GM10248 (cell line): ENCODE measurements at regions of chr1 and their contacts with region 1.

Region 1: GRCh38 chr1:214328770-214329469 is 48.0 kb downstream of the SMYD2 start:
- DNase-seq: peak; percentile 82
- CTCF ChIP-seq: peak; percentile 96

Region 2: GRCh38 chr1:214146523-214146922 is 182.4 kb before region 1 on chr1:
- CTCF ChIA-PET with region 1: no interaction called
- POLR2A ChIA-PET with region 1: no interaction called
- DNase-seq: no peak
- CTCF ChIP-seq: no peak

Region 3: GRCh38 chr1:214247501-214248041 is 81.3 kb before region 1 on chr1:
- CTCF ChIA-PET with region 1: interaction called, 44 read pairs
- POLR2A ChIA-PET with region 1: no interaction called
- DNase-seq: no peak
- CTCF ChIP-seq: no peak

Region 4: GRCh38 chr1:214281021-214281719 is 47.8 kb before region 1 on chr1 and contains the start of gene SMYD2:
- CTCF ChIA-PET with region 1: interaction called, 77 read pairs
- POLR2A ChIA-PET with region 1: no interaction called
- DNase-seq: peak; percentile 82
- CTCF ChIP-seq: no peak

Region 5: DNA sequence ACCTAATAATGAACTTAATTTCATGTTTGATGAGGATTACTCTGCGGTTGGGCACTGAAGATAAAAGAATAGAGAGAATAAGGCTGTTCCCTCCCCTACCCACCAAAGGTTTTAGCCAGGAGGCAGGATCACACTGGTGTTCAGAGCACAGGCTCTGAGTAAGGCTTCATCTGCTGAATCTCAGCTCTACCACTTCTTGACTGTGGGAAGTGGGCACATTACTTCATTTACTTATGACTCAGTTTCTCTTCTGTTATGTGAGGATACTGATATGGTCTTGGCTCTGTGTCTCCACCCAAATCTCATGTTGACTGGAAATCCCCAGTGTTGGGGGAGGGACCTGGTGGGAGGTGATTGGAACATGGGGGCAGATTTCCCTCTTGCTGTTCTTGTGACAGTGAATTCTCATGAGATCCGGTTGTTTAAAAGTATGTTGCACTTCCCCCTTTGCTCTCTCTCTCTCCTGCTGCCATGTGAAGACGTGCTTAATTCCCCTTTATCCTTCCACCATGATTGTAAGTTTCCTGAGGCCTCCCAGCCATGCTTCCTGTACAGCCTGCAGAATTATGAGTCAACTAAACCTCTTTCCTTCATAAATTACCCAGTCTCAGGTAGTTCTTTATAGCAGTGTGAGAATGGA is 31.7 kb after region 1 on chr1:
- CTCF ChIA-PET with region 1: interaction called, 289 read pairs
- POLR2A ChIA-PET with region 1: no interaction called
- DNase-seq: no peak
- CTCF ChIP-seq: no peak

Region 6: GRCh38 chr1:214584805-214585766 is 256.2 kb after region 1 on chr1:
- CTCF ChIA-PET with region 1: interaction called, 144 read pairs
- POLR2A ChIA-PET with region 1: no interaction called
- DNase-seq: peak; percentile 26
- CTCF ChIP-seq: peak; percentile 57

Region 7: GRCh38 chr1:214637722-214638458 is 309.0 kb after region 1 on chr1:
- CTCF ChIA-PET with region 1: interaction called, 20 read pairs
- POLR2A ChIA-PET with region 1: no interaction called
- DNase-seq: peak; percentile 22
- CTCF ChIP-seq: peak; percentile 50